ENCODE measurements at regions of chr13 and their contacts with region 1.

Region 1: DNA sequence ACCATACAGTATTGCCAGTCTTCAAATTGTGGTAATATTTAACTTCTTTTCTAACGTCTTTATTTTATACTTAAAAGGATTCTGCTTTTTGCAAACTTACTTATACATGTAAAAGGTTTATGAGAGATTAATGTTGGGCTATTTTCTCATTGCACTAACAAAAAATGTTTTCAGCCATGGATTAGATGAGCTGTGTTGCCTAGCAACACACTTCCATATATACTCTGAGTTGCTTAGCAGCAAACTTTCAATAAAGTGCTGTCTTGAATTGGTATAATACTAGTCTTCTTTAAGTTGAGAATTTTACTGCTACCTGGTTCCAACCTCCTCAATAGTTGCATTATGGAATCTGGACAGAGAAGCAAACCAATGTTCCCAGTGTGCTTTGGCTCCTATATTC is 777.4 kb upstream of the PCDH9 start:
- DNase-seq: no peak
- ATAC-seq: no peak
- H3K4me3 ChIP-seq: no peak overlapping the region
- H3K27ac ChIP-seq: no peak overlapping the region
- H3K4me1 ChIP-seq: no peaks in the 10 kb centered on the region
- H3K27me3 ChIP-seq: no peaks in the 10 kb centered on the region
- CTCF ChIP-seq: no peak

Region 2: GRCh38 chr13:67946131-67946530 is 61.4 kb before region 1 on chr13:
- intact Hi-C with region 1: no loop called
- DNase-seq: no peak
- ATAC-seq: no peak
- H3K4me3 ChIP-seq: no peak overlapping the region
- H3K27ac ChIP-seq: no peak overlapping the region
- H3K4me1 ChIP-seq: no peaks in the 10 kb centered on the region
- H3K27me3 ChIP-seq: no peaks in the 10 kb centered on the region
- CTCF ChIP-seq: no peak

Region 3: GRCh38 chr13:67996101-67996500 is 11.5 kb before region 1 on chr13:
- intact Hi-C with region 1: loop called in 1 of 2 experiments (anchors 1 kb)
- DNase-seq: no peak
- ATAC-seq: no peak
- H3K4me3 ChIP-seq: no peak overlapping the region
- H3K27ac ChIP-seq: no peak overlapping the region
- H3K4me1 ChIP-seq: no peaks in the 10 kb centered on the region
- H3K27me3 ChIP-seq: no peaks in the 10 kb centered on the region
- CTCF ChIP-seq: no peak

Region 4: GRCh38 chr13:68199271-68199670 is 191.7 kb after region 1 on chr13:
- intact Hi-C with region 1: no loop called
- DNase-seq: no peak
- ATAC-seq: no peak
- H3K4me3 ChIP-seq: no peak overlapping the region
- H3K27ac ChIP-seq: no peak overlapping the region
- H3K4me1 ChIP-seq: no peaks in the 10 kb centered on the region
- H3K27me3 ChIP-seq: no peaks in the 10 kb centered on the region
- CTCF ChIP-seq: no peak